ENCODE measurements at regions of chr21 and their contacts with region 1.

Region 1: GRCh38 chr21:33924079-33924765 is 8.6 kb upstream of the ATP5PO start:
- DNase-seq: peak; percentile 95
- ATAC-seq: peak; percentile 98
- H3K4me3 Mint-ChIP-seq: no peak overlapping the region
- H3K27ac Mint-ChIP-seq: peak overlapping the region; percentile 46
- H3K4me1 Mint-ChIP-seq: peaks cover 8% of the 10 kb centered on the region
- H3K27me3 Mint-ChIP-seq: no peaks in the 10 kb centered on the region
- CTCF ChIP-seq: peak; percentile 90

Region 2: GRCh38 chr21:33866826-33867225 is 57.4 kb before region 1 on chr21:
- CTCF ChIA-PET with region 1: no interaction called
- POLR2A ChIA-PET with region 1: no interaction called
- intact Hi-C with region 1: no loop called
- DNase-seq: no peak
- ATAC-seq: no peak
- H3K4me3 Mint-ChIP-seq: no peak overlapping the region
- H3K27ac Mint-ChIP-seq: no peak overlapping the region
- H3K4me1 Mint-ChIP-seq: peaks cover 3% of the 10 kb centered on the region
- H3K27me3 Mint-ChIP-seq: no peaks in the 10 kb centered on the region
- CTCF ChIP-seq: no peak

Region 3: DNA sequence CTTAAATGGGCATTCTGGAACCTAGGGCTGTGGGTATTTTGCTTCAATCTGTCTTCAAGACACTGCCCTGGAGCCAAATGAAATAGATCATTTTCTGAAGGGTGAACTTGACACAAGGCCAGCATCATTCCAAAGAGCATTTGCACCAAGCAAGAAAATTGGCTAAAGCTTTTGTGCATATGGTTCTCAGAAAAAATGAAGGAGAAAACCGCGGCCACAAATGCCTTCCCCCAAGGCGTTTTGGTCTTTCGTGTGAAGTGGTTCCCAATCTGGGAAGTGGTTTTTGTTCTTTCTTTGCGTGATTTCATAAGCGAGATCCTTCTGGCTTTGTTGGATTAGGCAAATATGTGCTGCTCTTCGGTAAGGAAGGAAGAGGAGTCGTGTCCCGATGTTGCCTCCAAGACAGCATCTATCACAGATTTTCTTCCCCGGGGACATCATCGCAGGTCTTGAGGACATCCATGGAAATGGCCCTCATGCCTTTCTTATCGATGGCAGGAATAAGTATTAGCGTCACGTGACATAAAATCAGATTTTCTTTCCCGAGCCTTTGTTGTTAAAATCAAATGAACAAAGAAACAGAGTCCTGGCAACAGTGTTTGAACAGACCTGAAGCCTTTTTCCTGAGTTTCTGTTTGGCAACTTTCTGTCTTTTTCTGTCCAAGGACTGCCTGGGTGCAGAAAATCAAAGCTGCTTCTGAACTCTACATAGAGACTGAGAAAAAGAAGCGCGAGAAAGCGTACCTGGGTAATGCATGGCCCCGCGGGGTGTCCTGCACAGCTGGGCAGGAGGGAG is 39.6 kb before region 1 on chr21:
- CTCF ChIA-PET with region 1: no interaction called
- POLR2A ChIA-PET with region 1: no interaction called
- intact Hi-C with region 1: no loop called
- DNase-seq: no peak
- ATAC-seq: no peak
- H3K4me3 Mint-ChIP-seq: no peak overlapping the region
- H3K27ac Mint-ChIP-seq: no peak overlapping the region
- H3K4me1 Mint-ChIP-seq: no peaks in the 10 kb centered on the region
- H3K27me3 Mint-ChIP-seq: no peaks in the 10 kb centered on the region
- CTCF ChIP-seq: no peak

Region 4: GRCh38 chr21:33947451-33948095 is 23.4 kb after region 1 on chr21:
- CTCF ChIA-PET with region 1: interaction called, 18 read pairs
- POLR2A ChIA-PET with region 1: interaction called, 12 read pairs
- intact Hi-C with region 1: no loop called
- DNase-seq: peak; percentile 94
- ATAC-seq: peak; percentile 57
- H3K4me3 Mint-ChIP-seq: peak overlapping the region; percentile 75
- H3K27ac Mint-ChIP-seq: peak overlapping the region; percentile 100
- H3K4me1 Mint-ChIP-seq: peaks cover 75% of the 10 kb centered on the region
- H3K27me3 Mint-ChIP-seq: peaks cover 3% of the 10 kb centered on the region
- CTCF ChIP-seq: no peak

Region 5: DNA sequence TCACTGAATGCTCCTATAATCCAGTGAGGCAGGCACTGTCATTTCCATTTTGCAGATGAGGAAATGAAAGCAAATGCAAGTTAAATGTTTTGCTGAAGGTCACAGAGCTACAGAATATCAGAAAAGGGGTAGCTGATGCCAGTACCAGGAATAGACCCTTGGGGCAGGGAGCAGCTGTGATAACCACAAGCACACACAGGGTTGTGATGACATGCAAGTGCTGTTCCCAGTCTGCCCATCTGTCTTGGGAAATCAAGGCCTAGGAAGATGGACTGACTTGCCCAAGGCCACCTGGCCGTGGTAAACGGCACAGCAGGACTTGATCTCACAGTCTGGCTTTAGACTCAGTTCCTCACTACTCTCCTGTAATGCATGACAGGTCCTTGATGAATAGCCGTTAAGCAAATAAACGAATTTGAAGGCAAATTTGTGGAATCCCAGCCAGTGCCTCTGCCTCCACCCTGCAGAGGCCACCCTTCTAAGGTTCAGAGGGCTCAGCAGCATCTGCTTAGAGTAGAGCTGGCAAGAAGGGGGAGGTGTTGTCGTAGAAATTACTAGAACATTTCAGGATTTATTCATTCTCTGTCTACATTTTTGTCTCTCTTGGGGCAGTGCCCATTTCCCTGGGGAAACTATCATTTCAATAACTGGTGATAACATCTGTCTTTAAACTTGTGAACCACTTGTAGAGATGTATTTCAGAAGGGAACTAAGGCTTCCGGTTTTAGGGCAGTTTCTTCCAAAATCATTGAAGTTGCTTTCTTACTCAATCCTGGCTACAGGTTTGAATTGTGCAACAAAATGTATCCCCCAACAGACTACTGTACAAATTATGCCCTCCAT is 96.0 kb after region 1 on chr21:
- CTCF ChIA-PET with region 1: interaction called, 11 read pairs
- POLR2A ChIA-PET with region 1: no interaction called
- intact Hi-C with region 1: no loop called
- DNase-seq: no peak
- ATAC-seq: no peak
- H3K4me3 Mint-ChIP-seq: no peak overlapping the region
- H3K27ac Mint-ChIP-seq: peak overlapping the region; percentile 2
- H3K4me1 Mint-ChIP-seq: peaks cover 23% of the 10 kb centered on the region
- H3K27me3 Mint-ChIP-seq: no peaks in the 10 kb centered on the region
- CTCF ChIP-seq: no peak

Region 6: DNA sequence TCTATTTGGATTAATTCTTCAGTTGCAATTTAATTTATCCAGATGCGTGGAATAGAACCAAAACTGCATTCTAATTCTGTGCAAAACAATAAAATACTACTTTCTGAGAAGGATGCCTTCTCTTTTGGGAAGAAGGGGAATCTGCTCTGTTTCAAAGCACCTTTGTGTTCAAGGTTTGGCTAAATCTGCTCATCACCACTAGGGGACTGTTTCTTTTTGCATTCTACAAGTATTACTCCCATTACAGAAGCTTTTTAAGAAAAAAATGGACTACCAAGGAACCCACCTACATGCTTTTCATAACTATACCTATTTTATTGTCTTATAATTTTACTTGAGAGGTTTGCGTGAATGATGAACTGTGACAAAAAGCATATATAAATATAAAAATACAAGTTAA is 167.4 kb after region 1 on chr21:
- CTCF ChIA-PET with region 1: interaction called, 40 read pairs
- POLR2A ChIA-PET with region 1: no interaction called
- intact Hi-C with region 1: no loop called
- DNase-seq: no peak
- ATAC-seq: no peak
- H3K4me3 Mint-ChIP-seq: no peak overlapping the region
- H3K27ac Mint-ChIP-seq: peak overlapping the region; percentile 47
- H3K4me1 Mint-ChIP-seq: peaks cover 57% of the 10 kb centered on the region
- H3K27me3 Mint-ChIP-seq: no peaks in the 10 kb centered on the region
- CTCF ChIP-seq: peak; percentile 43

Region 7: DNA sequence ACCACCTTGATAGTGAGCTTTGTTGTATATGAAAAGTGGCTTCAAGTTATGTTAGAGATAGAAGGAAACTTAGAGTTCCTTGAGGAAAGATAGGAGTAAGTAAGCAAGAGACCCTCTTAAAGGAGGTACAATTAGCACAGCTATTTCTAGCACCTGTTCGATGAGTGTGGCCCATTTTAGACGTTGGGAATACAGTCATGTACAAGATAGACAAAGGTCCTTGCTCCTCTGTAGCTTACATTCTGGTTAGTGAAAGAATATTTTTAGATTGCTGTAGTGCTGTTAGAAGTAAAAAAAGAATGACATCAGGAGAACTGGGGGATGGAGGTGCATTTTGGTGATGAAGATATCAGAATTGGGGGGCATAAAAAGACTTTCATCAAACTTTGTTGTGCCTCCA is 196.6 kb after region 1 on chr21:
- CTCF ChIA-PET with region 1: interaction called, 18 read pairs
- POLR2A ChIA-PET with region 1: no interaction called
- intact Hi-C with region 1: no loop called
- DNase-seq: no peak
- ATAC-seq: no peak
- H3K4me3 Mint-ChIP-seq: no peak overlapping the region
- H3K27ac Mint-ChIP-seq: no peak overlapping the region
- H3K4me1 Mint-ChIP-seq: peaks cover 43% of the 10 kb centered on the region
- H3K27me3 Mint-ChIP-seq: no peaks in the 10 kb centered on the region
- CTCF ChIP-seq: no peak

Region 8: DNA sequence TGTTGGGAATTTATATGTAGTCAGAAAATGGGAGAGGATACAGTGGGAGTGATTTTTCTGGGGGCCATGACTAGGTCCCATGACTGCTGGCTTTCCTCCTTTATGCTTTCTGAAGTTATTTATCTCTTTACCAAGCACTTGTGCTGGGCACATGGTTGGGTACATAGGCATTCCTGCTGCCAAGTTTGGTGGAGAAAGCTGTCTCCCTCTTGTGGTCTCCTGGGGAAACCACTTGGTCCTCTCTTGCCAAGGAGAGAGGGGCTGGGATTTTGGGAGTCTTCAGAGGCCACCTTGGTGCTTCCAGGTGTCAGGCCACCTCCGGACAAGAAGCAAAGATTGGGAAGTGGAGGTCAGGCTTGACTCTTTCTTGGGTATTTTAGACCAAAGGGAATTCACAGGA is 319.3 kb after region 1 on chr21:
- CTCF ChIA-PET with region 1: interaction called, 16 read pairs
- POLR2A ChIA-PET with region 1: no interaction called
- intact Hi-C with region 1: loop called (anchors 10 kb)
- DNase-seq: peak; percentile 34
- ATAC-seq: no peak
- H3K4me3 Mint-ChIP-seq: no peak overlapping the region
- H3K27ac Mint-ChIP-seq: no peak overlapping the region
- H3K4me1 Mint-ChIP-seq: no peaks in the 10 kb centered on the region
- H3K27me3 Mint-ChIP-seq: no peaks in the 10 kb centered on the region
- CTCF ChIP-seq: peak; percentile 31

Region 9: DNA sequence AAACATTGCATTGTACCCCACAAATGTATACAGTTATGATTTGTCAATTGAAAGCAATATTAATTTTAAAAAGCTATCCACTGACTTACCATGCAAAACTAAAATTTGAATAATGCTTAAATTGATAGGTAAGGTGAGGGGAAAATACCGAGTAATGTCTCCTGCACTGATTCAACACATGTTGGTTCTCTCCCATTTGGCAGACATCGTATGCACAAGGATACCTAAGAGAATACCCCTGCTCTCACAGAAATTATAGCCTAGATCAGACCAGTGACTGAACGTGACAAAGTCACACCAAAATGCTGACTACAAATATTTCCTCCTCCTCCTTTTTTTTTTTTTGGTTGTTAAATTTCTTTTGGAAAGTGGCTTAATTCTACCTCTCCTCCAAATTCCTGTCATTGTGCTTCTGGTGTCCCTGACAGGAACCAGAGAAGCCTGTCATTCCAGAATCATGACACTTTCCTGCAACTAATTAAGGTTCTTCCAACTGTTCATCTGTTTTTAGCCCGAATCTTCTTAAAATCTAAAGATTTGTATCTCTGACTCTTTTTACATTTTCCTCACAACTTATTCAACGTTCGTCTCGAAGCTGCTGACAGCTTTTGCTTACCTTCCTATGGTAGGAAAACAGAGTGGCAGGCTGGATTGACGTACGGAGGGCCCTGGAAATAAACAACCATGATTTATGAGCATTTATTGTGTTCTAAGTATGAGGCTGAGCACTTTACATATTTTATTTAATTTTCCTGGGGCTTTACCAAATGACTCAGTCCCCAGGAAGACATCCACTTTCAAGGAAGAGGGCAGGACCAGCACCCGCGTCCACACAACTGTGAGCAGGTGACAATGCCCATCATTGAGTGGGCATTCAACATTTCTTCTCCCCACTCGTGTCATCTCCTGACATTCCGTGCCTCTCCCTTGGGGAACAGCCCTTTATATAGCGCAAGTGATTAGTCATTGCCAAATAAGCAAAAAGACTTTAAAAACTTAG is 381.7 kb after region 1 on chr21:
- CTCF ChIA-PET with region 1: no interaction called
- POLR2A ChIA-PET with region 1: no interaction called
- intact Hi-C with region 1: no loop called
- DNase-seq: no peak
- ATAC-seq: no peak
- H3K4me3 Mint-ChIP-seq: no peak overlapping the region
- H3K27ac Mint-ChIP-seq: no peak overlapping the region
- H3K4me1 Mint-ChIP-seq: no peaks in the 10 kb centered on the region
- H3K27me3 Mint-ChIP-seq: no peaks in the 10 kb centered on the region
- CTCF ChIP-seq: no peak

Region 10: DNA sequence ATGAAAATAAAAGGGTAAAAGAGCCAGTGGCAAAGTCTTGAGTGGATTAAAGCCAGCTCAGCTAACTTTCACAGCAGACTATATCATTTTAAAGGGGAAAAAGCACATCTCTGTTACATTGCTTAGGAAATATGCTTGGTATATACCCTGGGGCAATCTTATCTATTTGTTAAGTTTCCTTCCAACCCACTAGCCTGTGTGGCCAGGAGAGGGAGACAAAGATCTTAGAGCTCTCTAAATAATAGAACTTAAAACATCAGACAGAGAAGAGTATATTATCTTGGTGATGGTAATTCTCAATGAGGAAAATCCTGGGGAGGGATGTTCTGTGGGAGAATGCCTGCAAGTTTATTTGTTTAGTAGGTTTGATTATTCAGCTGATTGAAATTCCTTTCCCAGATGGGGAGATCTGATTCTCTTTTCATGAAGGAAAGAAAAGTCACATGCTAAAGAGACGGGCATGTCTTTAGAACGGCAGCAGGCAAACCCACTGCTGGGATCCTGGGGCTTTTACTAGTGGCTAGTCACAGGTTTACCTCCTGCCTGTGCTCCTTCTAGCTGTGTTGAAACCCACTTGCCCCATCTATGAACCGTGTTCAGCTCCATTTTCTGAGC is 443.2 kb after region 1 on chr21:
- CTCF ChIA-PET with region 1: interaction called, 15 read pairs
- POLR2A ChIA-PET with region 1: no interaction called
- intact Hi-C with region 1: no loop called
- DNase-seq: peak; percentile 71
- ATAC-seq: peak; percentile 60
- H3K4me3 Mint-ChIP-seq: no peak overlapping the region
- H3K27ac Mint-ChIP-seq: no peak overlapping the region
- H3K4me1 Mint-ChIP-seq: peaks cover 2% of the 10 kb centered on the region
- H3K27me3 Mint-ChIP-seq: peaks cover 5% of the 10 kb centered on the region
- CTCF ChIP-seq: peak; percentile 66